ENCODE measurements at regions of chr1 and their contacts with region 1.

Region 1: DNA sequence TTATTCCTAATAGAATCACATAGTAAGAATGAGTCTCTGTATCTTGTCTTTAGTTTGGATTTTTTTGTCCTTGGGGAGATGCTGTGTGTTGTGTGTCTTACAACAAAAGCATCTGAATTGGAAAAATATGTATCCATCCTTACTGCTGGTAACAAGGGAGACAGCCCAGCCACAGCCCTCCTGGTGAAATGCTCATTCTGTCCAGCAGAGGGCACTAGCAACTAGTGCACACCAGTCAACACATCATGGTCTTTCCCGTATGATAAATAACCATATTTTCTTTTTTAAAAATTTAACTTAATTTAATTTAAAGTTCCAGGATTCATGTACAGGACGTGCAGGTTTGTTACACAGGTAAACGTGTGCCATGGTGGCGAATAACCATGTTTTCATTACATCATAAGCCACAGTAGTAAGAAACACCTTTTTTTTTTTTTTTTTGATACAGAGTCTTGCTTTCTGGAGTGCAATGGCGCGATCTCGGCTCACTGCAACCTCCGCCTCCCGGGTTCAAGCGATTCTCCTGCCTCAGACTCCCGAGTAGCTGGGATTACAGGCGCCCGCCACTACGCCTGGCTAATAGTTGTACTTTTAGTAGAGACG is 245.1 kb downstream of the PTBP2 start:
- DNase-seq: peak; percentile 60
- H3K4me3 ChIP-seq: peak overlapping the region; percentile 32 to 45 (median 42)
- H3K27ac ChIP-seq: no peak overlapping the region
- H3K4me1 ChIP-seq: no peaks in the 10 kb centered on the region
- H3K27me3 ChIP-seq: peaks cover 3% of the 10 kb centered on the region
- CTCF ChIP-seq: peak; percentile 95 to 97

Region 2: DNA sequence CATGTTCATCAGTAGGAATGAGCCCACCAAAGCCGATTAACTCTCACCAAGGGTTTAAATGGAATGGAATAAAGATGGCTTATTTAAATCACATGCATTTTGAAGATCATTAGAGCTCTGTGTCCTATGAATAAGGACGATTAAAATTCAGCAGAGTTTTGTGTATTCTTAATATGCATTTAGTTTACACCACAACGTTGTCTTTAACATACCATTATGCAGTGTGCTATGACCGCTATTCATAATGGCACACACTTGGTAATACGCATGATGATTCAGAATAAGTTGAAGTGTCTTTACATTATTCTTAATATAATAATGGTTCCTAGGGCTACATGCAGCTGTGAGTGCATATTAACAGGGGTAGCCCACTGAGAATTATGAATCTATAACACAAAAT is 54.4 kb before region 1 on chr1:
- CTCF ChIA-PET with region 1: no interaction called
- dilution Hi-C with region 1: no loop called
- in situ Hi-C with region 1: no loop called
- intact Hi-C with region 1: no loop called
- DNase-seq: no peak
- H3K4me3 ChIP-seq: no peak overlapping the region
- H3K27ac ChIP-seq: no peak overlapping the region
- H3K4me1 ChIP-seq: no peaks in the 10 kb centered on the region
- H3K27me3 ChIP-seq: peaks cover 1% of the 10 kb centered on the region
- CTCF ChIP-seq: no peak

Region 3: DNA sequence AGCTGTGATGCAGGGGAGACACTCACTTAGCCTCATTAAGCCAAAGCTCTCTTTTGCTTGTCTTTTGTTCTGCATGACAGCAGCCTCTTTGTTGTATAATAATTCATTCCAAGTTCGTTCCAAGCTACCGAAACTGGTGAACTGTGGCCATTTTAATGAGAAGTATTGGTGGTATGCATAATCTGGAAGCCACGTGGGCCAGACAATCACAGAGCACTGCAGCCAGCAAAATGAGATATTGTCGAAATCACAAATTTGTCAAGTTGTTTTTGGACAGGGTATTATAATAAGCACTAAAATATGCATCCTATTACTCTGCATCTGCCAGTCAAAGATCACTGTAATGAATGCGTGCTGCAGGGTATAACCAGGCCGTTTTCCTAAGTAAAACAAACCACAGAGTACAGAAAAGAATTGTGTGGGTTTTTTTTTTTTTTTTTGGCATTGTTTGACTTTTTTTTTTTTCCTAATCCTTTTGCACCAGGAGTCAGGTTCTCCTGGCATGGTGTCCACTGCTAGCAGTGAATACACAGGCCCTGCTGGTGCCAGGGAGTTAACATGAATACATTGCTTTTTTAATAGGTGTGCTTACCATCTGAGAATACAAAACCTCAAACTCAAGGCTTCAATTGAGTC is 178.8 kb after region 1 on chr1:
- CTCF ChIA-PET with region 1: no interaction called
- dilution Hi-C with region 1: no loop called
- in situ Hi-C with region 1: no loop called
- intact Hi-C with region 1: loop called (anchors 10 kb)
- DNase-seq: peak; percentile 65
- H3K4me3 ChIP-seq: no peak overlapping the region
- H3K27ac ChIP-seq: peak overlapping the region; percentile 46
- H3K4me1 ChIP-seq: peaks cover 26% of the 10 kb centered on the region
- H3K27me3 ChIP-seq: no peaks in the 10 kb centered on the region
- CTCF ChIP-seq: no peak

Region 4: DNA sequence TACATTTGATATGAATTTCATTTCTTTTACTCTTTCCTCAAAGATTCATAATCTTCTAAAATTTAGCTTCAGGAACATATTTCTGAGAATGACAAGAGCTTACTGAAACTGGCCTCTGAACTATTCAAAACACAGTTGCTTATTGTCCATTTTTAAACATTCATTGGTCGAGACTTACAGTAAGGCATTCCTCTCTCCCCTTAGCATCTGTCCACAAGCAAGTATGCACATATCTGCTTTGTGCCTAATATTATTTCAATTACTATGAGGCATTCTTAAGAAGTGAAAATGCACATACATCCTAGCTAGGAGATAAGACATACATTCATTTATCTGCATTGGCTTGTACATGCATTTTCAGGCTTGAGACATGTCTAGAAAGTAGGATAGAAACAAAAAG is 243.7 kb after region 1 on chr1:
- CTCF ChIA-PET with region 1: no interaction called
- dilution Hi-C with region 1: no loop called
- in situ Hi-C with region 1: no loop called
- intact Hi-C with region 1: loop called (anchors 10 kb)
- DNase-seq: no peak
- H3K4me3 ChIP-seq: no peak overlapping the region
- H3K27ac ChIP-seq: no peak overlapping the region
- H3K4me1 ChIP-seq: peaks cover 10% of the 10 kb centered on the region
- H3K27me3 ChIP-seq: no peaks in the 10 kb centered on the region
- CTCF ChIP-seq: no peak

Region 5: GRCh38 chr1:97529600-97529999 is 563.0 kb after region 1 on chr1:
- CTCF ChIA-PET with region 1: no interaction called
- dilution Hi-C with region 1: no loop called
- in situ Hi-C with region 1: no loop called
- intact Hi-C with region 1: loop called (anchors 5 kb)
- DNase-seq: no peak
- H3K4me3 ChIP-seq: no peak overlapping the region
- H3K27ac ChIP-seq: no peak overlapping the region
- H3K4me1 ChIP-seq: no peaks in the 10 kb centered on the region
- H3K27me3 ChIP-seq: no peaks in the 10 kb centered on the region
- CTCF ChIP-seq: no peak

Region 6: DNA sequence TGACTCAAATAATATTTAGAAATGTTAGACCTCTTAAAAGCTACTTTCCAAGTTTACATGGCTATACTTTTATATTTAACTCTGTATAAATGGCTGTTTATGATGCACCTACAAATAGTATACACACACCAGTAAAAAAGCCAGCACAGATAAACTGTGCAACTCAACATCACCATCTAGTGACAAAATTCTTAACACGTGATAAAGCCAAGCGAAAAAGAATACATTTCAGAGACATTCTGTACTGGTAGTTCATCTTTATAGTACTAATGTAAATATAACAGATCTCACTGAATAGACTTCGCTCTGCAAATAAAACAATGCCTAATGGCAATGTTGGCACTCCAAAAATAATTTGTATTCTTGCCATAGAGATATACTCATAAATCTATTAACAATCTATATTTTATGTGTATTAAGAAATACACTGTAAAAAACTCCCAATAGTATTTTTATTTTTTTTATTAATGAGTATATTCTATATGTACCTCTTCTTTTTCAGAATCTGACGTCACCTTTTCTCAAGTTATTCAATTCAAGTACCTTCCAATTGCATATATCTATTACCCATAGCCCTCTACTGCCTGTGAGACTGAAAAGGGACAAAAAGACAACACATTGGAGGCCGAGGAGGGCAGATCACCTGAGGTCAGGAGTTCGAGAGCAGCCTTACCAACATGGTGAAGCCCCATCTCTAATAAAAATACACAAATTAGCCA is 854.0 kb after region 1 on chr1:
- CTCF ChIA-PET with region 1: no interaction called
- dilution Hi-C with region 1: no loop called
- in situ Hi-C with region 1: no loop called
- intact Hi-C with region 1: loop called (anchors 2 kb)
- DNase-seq: peak; percentile 23
- H3K4me3 ChIP-seq: no peak overlapping the region
- H3K27ac ChIP-seq: no peak overlapping the region
- H3K4me1 ChIP-seq: no peaks in the 10 kb centered on the region
- H3K27me3 ChIP-seq: no peaks in the 10 kb centered on the region
- CTCF ChIP-seq: peak; percentile 36 to 53